Pancreas (tissue), 10 donors: ENCODE measurements at regions of chr7 and their contacts with region 1.

Region 1: GRCh38 chr7:123748734-123749536 is at the start of gene WASL:
- DNase-seq: peak; percentile 90 to 97 (median 93)
- ATAC-seq: peak; percentile 87 to 95 (median 94)
- H3K4me3 ChIP-seq: peak within 1 kb of the TSS; percentile 76 to 94 (median 85)
- H3K27ac ChIP-seq: peak within 1 kb of the TSS; percentile 94 to 99 (median 97)
- H3K4me1 ChIP-seq: peaks cover 13 to 53% (median 46%) of the 10 kb centered on the region in 3 donors
- H3K27me3 ChIP-seq: no peaks in the 10 kb centered on the region
- CTCF ChIP-seq: no peak
- total RNA-seq, gene WASL: 13.2 to 27.3 (median 18.0) TPM

Region 2: DNA sequence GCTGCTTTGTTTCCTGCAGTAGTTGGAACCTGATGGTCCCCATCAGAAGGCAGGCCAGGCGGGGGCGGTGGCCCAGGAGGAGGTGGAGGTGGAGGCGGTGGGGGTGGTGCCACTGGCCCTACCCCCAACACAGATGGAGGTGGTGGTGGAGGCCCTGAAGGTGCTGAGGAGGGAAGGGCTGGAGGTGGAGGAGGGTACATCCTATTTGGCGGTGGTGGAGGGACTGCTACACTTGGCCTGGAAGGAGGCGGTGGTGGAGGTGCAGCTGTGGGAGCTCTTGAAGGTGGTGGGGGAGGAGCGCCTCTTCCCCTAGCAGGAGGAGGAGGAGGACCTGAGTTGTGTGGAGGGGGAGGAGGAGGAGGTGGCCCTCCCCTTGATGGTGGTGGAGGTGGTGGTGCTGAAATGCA is 56.5 kb before region 1 on chr7:
- intact Hi-C with region 1: loop called in 1 of 3 experiments (anchors 10 kb)
- DNase-seq: peak in 1 of 6 donors; percentile 20
- ATAC-seq: no peak
- H3K4me3 ChIP-seq: no peak overlapping the region
- H3K27ac ChIP-seq: no peak overlapping the region
- H3K4me1 ChIP-seq: peaks cover 0 to 12% (median 6%) of the 10 kb centered on the region in 3 donors
- H3K27me3 ChIP-seq: no peaks in the 10 kb centered on the region
- CTCF ChIP-seq: no peak

Region 3: GRCh38 chr7:123770378-123770777 is 21.4 kb after region 1 on chr7:
- intact Hi-C with region 1: no loop called
- DNase-seq: no peak
- ATAC-seq: peak in 2 of 4 donors; percentile 27 to 74
- H3K4me3 ChIP-seq: no peak overlapping the region
- H3K27ac ChIP-seq: no peak overlapping the region
- H3K4me1 ChIP-seq: peaks cover 0 to 3% (median 0%) of the 10 kb centered on the region in 3 donors
- H3K27me3 ChIP-seq: no peaks in the 10 kb centered on the region
- CTCF ChIP-seq: no peak

Region 4: GRCh38 chr7:123849855-123850254 is 100.9 kb after region 1 on chr7:
- intact Hi-C with region 1: no loop called
- DNase-seq: no peak
- ATAC-seq: no peak
- H3K4me3 ChIP-seq: no peak overlapping the region
- H3K27ac ChIP-seq: no peak overlapping the region
- H3K4me1 ChIP-seq: no peaks in the 10 kb centered on the region
- H3K27me3 ChIP-seq: no peaks in the 10 kb centered on the region
- CTCF ChIP-seq: no peak